ENCODE measurements at regions of chr17 and their contacts with region 1.

Region 1: DNA sequence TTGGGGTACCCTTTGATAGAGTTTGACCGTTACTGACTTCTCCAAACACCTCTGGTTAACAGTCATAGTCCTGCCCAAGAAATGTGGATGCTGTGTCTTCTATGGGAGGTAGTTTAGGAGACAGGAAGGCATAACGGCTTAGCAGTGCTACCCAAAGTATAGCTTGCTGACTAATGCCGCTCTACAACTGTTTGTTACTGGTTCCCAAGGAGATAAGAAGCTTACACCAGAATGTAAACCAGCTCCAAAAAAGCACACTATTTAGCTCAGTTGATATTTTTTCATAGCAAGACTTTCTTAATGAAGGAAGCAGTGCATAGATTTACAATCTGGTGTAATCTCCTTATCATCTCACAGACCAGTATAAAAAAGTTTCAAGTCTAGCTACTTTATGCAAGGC is 95.7 kb downstream of the HS3ST3B1 start:
- DNase-seq: no peak
- H3K4me3 ChIP-seq: no peak overlapping the region
- H3K27ac ChIP-seq: no peak overlapping the region
- H3K4me1 ChIP-seq: no peaks in the 10 kb centered on the region
- H3K27me3 ChIP-seq: no peaks in the 10 kb centered on the region
- CTCF ChIP-seq: no peak

Region 2: GRCh38 chr17:14427900-14428647 is 31.5 kb after region 1 on chr17:
- intact Hi-C with region 1: no loop called
- DNase-seq: no peak
- H3K4me3 ChIP-seq: no peak overlapping the region
- H3K27ac ChIP-seq: no peak overlapping the region
- H3K4me1 ChIP-seq: peaks cover 0 to 2% of the 10 kb centered on the region in 2 donors
- H3K27me3 ChIP-seq: no peaks in the 10 kb centered on the region
- CTCF ChIP-seq: no peak

Region 3: DNA sequence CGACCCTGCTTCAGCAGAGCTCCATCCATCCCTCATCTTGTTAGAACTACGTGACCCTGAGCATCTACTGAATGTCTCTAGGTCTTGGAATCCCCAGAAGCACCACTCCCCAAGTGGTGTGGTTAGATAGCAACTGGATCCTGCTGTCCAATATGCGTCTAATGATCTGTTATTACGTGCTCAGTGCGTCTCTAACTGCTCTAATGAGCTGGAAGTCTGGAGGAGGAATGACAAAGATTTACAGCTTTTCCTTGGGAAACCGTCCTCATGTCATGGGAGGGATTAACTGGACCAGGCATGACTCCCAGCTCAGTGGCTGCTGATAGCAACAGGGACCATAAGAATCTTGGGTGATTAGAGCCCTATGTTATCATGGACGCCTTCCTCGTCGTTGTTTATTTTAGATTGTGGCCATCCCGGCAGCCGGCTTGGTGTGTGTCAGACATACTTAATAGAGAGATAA is 55.2 kb after region 1 on chr17:
- intact Hi-C with region 1: loop called (anchors 5 kb)
- DNase-seq: no peak
- H3K4me3 ChIP-seq: no peak overlapping the region
- H3K27ac ChIP-seq: no peak overlapping the region
- H3K4me1 ChIP-seq: no peaks in the 10 kb centered on the region
- H3K27me3 ChIP-seq: no peaks in the 10 kb centered on the region
- CTCF ChIP-seq: no peak

Measured in ascending aorta (tissue), 2 donors.